Upper lobe of right lung (tissue), 1 donor: ENCODE measurements at regions of chr4 and their contacts with region 1.

Region 1: DNA sequence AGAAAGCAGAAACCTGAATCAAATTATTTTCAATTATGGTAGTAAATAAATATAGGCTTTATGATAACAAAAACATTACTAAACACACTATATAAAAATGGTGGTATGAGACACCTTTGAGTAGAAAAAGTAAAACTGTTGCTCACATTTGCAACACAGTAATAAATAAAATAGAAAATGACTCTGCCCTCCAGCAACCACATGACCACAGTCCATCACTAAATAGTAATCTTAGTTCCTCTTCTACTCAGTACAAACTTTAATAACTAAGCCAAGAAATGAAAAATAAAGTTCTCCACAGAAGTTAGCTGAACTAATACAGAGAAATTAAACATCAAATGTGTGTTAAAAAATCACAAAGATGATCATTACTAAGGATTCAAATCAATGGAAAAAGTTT is 108.5 kb downstream of the ADGRA3 start:
- DNase-seq: no peak
- ATAC-seq: no peak
- H3K4me3 ChIP-seq: no peak overlapping the region
- H3K27ac ChIP-seq: no peak overlapping the region
- H3K4me1 ChIP-seq: no peaks in the 10 kb centered on the region
- H3K27me3 ChIP-seq: no peaks in the 10 kb centered on the region
- CTCF ChIP-seq: no peak

Region 2: DNA sequence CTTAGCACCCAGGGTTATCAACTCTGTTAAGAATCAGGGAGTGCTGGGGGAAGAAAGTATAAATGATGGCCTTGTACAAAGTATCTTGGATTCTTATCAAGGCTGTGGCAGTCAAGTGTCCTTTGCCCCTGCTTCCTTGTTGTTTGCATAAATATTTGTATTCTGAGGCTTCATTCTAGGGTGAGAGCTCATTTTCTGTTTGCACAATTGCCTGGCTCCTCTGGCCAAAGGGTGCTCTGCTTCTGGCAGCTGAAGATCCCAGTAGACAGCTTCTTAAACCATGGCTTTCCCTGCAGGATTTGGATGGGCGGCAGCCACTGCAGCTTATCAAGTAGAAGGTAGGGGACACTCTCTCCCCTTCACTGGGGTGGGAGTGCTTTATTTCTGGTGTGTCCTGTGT is 285.4 kb after region 1 on chr4 and contains the start of gene GBA3:
- intact Hi-C with region 1: loop called (anchors 10 kb)
- DNase-seq: no peak
- ATAC-seq: peak; percentile 50
- H3K4me3 ChIP-seq: no peak within 1 kb of the TSS
- H3K27ac ChIP-seq: no peak within 1 kb of the TSS
- H3K4me1 ChIP-seq: no peaks in the 10 kb centered on the region
- H3K27me3 ChIP-seq: no peaks in the 10 kb centered on the region
- CTCF ChIP-seq: no peak
- total RNA-seq, gene GBA3: 0.26 TPM